ENCODE measurements at regions of chr1 and their contacts with region 1.

Region 1: DNA sequence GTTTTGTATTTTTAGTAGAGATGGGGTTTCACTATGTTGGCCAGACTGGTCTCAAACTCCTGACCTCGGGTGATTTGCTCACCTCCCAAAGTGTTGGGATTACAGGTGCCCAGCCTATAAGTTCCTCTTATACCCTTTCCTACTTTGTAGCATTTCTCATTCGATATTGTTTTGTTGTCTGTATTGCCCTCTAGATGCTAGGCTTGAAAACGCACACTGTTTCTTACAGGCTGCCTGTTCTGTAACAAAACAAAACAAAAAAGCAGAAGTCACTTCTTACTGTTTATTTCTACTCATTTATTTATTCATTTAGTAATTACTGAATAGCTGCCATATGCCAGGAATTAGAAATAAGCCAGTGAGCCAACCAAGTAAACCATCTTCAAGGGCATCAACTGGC is 136.9 kb upstream of the BMP8A start:
- DNase-seq: no peak
- ATAC-seq: 0 out of 2 replicates have a peak, but pooled peaks have one; percentile 28
- H3K4me3 ChIP-seq: no peak overlapping the region
- H3K27ac ChIP-seq: no peak overlapping the region
- H3K4me1 ChIP-seq: no peaks in the 10 kb centered on the region
- H3K27me3 ChIP-seq: no peaks in the 10 kb centered on the region
- CTCF ChIP-seq: no peak
- POLR2A ChIP-seq: no peak
- RAD21 ChIP-seq: no peak

Region 2: DNA sequence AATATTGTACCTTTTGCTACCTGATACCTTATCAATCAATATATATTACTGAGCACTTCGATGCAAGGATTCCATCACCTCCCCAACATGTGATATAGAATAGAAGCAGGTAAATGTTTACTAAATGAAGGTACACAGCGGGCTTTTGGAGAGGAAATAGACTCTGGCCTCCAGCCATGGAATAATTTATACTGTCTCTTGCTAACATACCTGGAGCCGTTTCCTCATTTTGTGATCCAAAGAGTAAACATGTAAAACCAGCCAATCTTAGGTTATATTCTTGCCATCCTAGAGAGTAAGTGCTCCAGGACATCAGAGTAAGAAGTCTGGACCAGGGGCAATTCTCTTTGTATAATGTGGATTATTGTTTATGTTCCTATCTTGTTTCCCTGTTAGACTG is 289.0 kb before region 1 on chr1:
- CTCF ChIA-PET with region 1: no interaction called
- POLR2A ChIA-PET with region 1: no interaction called
- dilution Hi-C with region 1: no loop called
- in situ Hi-C with region 1: no loop called
- intact Hi-C with region 1: no loop called
- DNase-seq: no peak
- ATAC-seq: no peak
- H3K4me3 ChIP-seq: no peak overlapping the region
- H3K27ac ChIP-seq: no peak overlapping the region
- H3K4me1 ChIP-seq: no peaks in the 10 kb centered on the region
- H3K27me3 ChIP-seq: no peaks in the 10 kb centered on the region
- CTCF ChIP-seq: no peak
- POLR2A ChIP-seq: no peak
- RAD21 ChIP-seq: no peak

Region 3: DNA sequence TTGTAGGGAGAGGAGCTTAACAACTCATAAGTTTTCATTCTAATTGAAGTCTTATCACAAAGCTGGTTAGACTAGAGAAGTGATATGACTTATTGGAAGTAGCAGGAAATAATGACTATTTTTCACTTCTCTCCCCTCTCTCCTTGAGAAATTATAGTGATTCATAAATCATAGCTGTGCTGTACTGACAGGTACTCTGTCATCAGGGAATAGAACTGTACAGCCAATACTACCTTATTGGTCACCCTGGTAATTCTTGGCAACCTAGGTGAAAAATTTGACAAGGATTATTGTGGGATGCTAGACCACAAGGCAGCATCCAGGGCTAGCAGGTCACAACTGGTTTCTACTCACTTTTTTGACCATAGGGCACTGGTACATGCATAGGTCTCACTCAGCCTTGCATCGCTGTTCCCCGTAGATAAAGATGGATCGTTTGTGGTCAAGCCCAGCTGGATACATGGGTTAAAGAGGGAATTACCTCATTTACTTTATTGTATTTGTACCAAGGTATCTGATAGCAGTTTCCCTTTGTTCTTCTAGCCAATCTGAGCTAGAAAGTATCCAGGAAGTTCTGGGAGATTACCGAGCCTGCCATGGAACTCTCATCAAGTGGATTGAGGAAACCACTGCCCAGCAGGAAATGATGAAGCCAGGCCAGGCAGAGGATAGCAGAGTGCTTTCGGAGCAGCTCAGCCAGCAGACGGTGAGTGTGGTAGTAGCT is 36.5 kb before region 1 on chr1:
- CTCF ChIA-PET with region 1: no interaction called
- POLR2A ChIA-PET with region 1: no interaction called
- dilution Hi-C with region 1: no loop called
- in situ Hi-C with region 1: no loop called
- intact Hi-C with region 1: no loop called
- DNase-seq: no peak
- ATAC-seq: no peak
- H3K4me3 ChIP-seq: no peak overlapping the region
- H3K27ac ChIP-seq: no peak overlapping the region
- H3K4me1 ChIP-seq: no peaks in the 10 kb centered on the region
- H3K27me3 ChIP-seq: no peaks in the 10 kb centered on the region
- CTCF ChIP-seq: no peak
- POLR2A ChIP-seq: no peak
- RAD21 ChIP-seq: no peak

Region 4: DNA sequence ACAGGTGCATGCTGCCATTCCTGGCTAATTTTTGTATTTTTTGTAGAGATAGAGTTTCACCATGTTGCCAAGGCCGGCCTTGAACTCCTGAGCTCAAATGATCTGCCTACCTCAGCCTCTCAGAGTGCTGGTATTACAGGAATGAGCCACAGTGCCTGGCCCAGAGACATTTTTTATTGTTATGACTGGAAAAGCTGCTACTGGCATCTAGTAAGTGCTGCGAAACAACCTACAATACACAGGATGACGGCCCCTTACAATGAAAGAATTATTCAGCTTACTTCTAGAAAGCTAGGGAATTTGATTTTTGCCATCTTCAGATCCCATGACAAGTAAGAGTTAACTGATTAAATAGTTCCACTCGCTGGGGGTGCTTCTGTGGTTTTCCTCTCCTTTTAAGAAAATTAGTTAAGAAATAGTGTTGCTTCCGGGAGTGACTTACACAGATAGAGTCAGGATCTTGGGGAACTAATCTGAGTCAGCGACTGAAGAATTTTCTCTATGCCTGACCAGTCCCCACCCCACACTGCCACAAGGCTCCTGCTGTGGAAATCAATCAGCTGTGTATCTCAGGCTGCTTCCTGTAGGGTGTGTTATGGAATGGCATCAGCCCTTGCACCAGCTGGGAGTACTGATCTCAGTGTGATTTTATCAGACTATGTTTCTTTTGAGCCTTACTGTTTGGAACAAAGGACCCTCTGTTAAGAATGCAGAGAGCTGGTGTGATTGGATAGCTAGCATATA is 43.9 kb after region 1 on chr1:
- CTCF ChIA-PET with region 1: no interaction called
- POLR2A ChIA-PET with region 1: no interaction called
- dilution Hi-C with region 1: no loop called
- in situ Hi-C with region 1: no loop called
- intact Hi-C with region 1: no loop called
- DNase-seq: peak; percentile 98
- ATAC-seq: peak; percentile 90
- H3K4me3 ChIP-seq: no peak overlapping the region
- H3K27ac ChIP-seq: peak overlapping the region; percentile 87
- H3K4me1 ChIP-seq: peaks cover 12% of the 10 kb centered on the region
- H3K27me3 ChIP-seq: no peaks in the 10 kb centered on the region
- CTCF ChIP-seq: no peak
- POLR2A ChIP-seq: no peak
- RAD21 ChIP-seq: no peak; the same call in 1 of the 2 replicates

Region 5: DNA sequence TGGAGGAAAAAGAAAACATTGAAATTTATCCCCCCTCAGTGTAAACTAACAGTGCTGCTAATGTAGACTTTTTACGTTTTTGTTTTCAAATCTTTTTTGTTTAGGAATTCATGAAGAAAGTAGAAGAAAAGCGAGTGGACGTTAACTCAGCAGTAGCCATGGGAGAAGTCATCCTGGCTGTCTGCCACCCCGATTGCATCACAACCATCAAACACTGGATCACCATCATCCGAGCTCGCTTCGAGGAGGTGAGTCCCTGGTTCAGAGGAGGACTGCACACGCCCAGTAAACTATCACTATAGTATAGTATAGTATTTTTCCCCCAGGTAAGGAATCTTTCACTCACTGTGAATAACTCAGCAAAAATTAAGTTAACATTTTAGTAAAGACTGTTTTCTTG is 99.0 kb after region 1 on chr1:
- CTCF ChIA-PET with region 1: no interaction called
- POLR2A ChIA-PET with region 1: no interaction called
- dilution Hi-C with region 1: loop called (anchors 25 kb)
- in situ Hi-C with region 1: no loop called
- intact Hi-C with region 1: no loop called
- DNase-seq: peak; percentile 80
- ATAC-seq: 0 out of 2 replicates have a peak, but pooled peaks have one; percentile 8
- H3K4me3 ChIP-seq: no peak overlapping the region
- H3K27ac ChIP-seq: no peak overlapping the region
- H3K4me1 ChIP-seq: peaks cover 12% of the 10 kb centered on the region
- H3K27me3 ChIP-seq: no peaks in the 10 kb centered on the region
- CTCF ChIP-seq: no peak
- POLR2A ChIP-seq: no peak
- RAD21 ChIP-seq: no peak